ENCODE measurements at regions of chr2 and their contacts with region 1.

Region 1: DNA sequence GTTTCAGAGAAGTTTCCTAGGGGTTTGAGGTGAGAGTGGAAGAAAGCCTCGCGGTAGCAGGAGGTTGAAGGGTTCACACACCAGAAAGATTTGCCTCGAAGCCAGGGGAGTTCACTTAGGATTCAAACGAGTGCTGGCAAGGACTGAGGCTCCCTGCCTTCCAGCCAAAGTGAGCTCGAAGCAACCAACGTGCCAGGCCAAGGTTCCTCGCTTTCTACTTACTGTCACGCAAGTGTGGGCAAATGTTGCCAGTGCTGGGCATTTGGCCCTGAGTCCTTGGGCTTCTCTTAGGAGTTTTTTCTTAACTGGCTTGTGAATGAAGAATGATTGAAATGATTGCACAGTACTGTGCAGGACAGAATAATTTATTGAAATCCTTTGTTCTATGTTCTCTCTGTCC is 53.6 kb downstream of the TMEM178A start:
- DNase-seq: no peak
- H3K4me3 ChIP-seq: no peak overlapping the region
- H3K27ac ChIP-seq: no peak overlapping the region
- H3K27me3 ChIP-seq: peaks cover 2% of the 10 kb centered on the region
- CTCF ChIP-seq: no peak

Region 2: GRCh38 chr2:39593439-39594393 is 125.6 kb before region 1 on chr2:
- CTCF ChIA-PET with region 1: interaction called, 13 read pairs
- POLR2A ChIA-PET with region 1: no interaction called
- DNase-seq: peak; percentile 73
- H3K4me3 ChIP-seq: no peak overlapping the region
- H3K27ac ChIP-seq: no peak overlapping the region
- H3K27me3 ChIP-seq: no peaks in the 10 kb centered on the region
- CTCF ChIP-seq: peak; percentile 89

Region 3: DNA sequence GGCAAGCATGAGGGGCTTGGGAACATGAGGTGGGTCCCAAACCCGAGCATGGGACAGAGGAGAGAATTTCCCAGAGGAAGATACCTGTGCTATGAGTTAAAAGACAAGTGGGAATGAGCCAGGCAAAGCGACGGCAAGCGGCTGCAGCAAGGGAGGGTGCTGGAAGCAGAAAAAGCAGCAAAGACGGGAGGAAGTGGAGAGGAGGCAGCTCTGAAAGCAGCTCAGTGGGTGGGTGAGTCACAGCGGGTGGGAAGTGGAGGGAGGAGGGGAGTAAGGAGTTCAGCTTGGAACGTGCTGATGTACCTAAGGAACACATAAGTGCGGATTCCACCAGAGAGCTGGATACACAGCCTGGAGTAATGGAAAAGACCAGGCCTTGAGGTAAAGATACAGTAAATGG is 18.3 kb after region 1 on chr2:
- CTCF ChIA-PET with region 1: no interaction called
- POLR2A ChIA-PET with region 1: no interaction called
- DNase-seq: peak; percentile 61
- H3K4me3 ChIP-seq: peak overlapping the region; percentile 45
- H3K27ac ChIP-seq: peak overlapping the region; percentile 71
- H3K27me3 ChIP-seq: no peaks in the 10 kb centered on the region
- CTCF ChIP-seq: no peak